PC-9 (cell line): ENCODE measurements at regions of chr5 and their contacts with region 1.

Region 1: GRCh38 chr5:169938439-169938838 is 41.9 kb downstream of the INSYN2B start:
- DNase-seq: no peak
- H3K4me3 ChIP-seq: no peak overlapping the region
- H3K27ac ChIP-seq: no peak overlapping the region
- H3K4me1 ChIP-seq: no peaks in the 10 kb centered on the region
- H3K27me3 ChIP-seq: no peaks in the 10 kb centered on the region
- CTCF ChIP-seq: no peak

Region 2: GRCh38 chr5:168607946-168608345 is 1330.5 kb before region 1 on chr5:
- CTCF ChIA-PET with region 1: no interaction called
- POLR2A ChIA-PET with region 1: interaction called, 12 read pairs
- intact Hi-C with region 1: no loop called
- DNase-seq: no peak
- H3K4me3 ChIP-seq: no peak overlapping the region
- H3K27ac ChIP-seq: no peak overlapping the region
- H3K4me1 ChIP-seq: no peaks in the 10 kb centered on the region
- H3K27me3 ChIP-seq: no peaks in the 10 kb centered on the region
- CTCF ChIP-seq: no peak

Region 3: GRCh38 chr5:169923988-169924387 is 14.5 kb before region 1 on chr5:
- CTCF ChIA-PET with region 1: no interaction called
- POLR2A ChIA-PET with region 1: no interaction called
- intact Hi-C with region 1: no loop called
- DNase-seq: no peak
- H3K4me3 ChIP-seq: no peak overlapping the region
- H3K27ac ChIP-seq: no peak overlapping the region
- H3K4me1 ChIP-seq: 0 out of 2 replicates have a peak, but pooled peaks cover 6% of the 10 kb centered on the region
- H3K27me3 ChIP-seq: no peaks in the 10 kb centered on the region
- CTCF ChIP-seq: no peak

Region 4: DNA sequence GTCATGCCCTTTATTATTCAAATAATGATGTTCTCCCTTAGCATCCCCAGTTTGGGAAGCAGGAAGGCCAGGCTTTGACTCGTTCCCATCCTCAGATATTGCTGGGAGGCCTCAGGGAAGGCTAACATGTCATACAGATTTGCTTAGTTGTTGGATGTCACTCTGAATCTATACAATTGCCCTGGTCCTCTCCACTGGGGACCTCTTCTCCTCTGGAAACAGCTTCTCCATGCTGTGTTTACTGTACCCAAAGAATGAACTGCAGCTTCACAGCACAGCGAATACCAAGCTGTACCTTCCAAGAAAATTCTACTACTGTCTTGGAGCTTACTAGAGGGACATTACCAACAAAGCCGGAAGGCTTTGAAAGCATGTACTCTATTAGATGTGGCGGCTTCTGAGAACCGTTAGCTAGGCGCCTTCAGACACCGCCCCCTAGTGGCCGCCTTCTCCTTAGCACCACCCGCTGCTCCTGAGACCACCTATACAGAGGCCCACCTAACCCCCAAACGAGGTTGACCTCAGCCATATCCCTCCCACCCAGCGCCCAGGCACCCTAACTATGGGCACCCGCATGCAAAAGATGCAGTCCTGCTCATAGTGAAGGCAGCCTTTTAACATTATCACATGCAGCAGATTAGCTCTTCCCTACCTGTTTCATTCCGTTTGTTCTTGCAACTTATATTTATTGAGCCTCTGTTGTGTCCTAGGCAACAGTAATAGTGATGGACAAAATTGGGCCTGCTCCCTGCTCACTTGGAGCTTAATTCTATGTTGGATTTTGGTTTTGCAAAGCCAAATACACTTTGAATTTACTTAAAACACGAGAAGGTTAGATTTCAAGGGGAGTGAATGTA is 132.3 kb after region 1 on chr5:
- CTCF ChIA-PET with region 1: no interaction called
- POLR2A ChIA-PET with region 1: no interaction called
- intact Hi-C with region 1: no loop called
- DNase-seq: no peak
- H3K4me3 ChIP-seq: no peak overlapping the region
- H3K27ac ChIP-seq: no peak overlapping the region
- H3K4me1 ChIP-seq: no peaks in the 10 kb centered on the region
- H3K27me3 ChIP-seq: no peaks in the 10 kb centered on the region
- CTCF ChIP-seq: peak; percentile 69

Region 5: DNA sequence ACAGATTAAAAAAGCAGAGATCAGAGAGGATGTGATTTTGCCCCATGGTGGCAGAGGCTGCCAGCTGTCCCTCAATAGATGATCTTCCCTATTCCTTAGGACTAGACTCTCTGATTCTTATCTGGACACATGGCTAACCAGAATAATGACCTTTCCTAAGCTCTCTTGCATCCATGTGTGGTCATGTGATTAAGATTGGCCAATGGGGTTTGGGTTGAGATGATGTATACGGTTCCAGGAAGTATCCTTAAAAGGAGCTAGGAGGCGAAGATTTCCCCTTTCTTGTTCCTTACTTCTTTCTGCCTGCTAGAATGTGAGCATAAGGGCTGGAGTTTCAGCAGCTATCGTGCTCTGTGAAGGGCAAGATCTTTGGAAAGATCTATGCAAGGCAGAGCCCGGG is 207.0 kb after region 1 on chr5:
- CTCF ChIA-PET with region 1: no interaction called
- POLR2A ChIA-PET with region 1: no interaction called
- intact Hi-C with region 1: no loop called
- DNase-seq: no peak
- H3K4me3 ChIP-seq: no peak overlapping the region
- H3K27ac ChIP-seq: no peak overlapping the region
- H3K4me1 ChIP-seq: peaks cover 7% of the 10 kb centered on the region
- H3K27me3 ChIP-seq: no peaks in the 10 kb centered on the region
- CTCF ChIP-seq: no peak

Region 6: GRCh38 chr5:170368586-170368985 is 430.1 kb after region 1 on chr5:
- CTCF ChIA-PET with region 1: no interaction called
- POLR2A ChIA-PET with region 1: no interaction called
- intact Hi-C with region 1: no loop called
- DNase-seq: no peak
- H3K4me3 ChIP-seq: no peak overlapping the region
- H3K27ac ChIP-seq: no peak overlapping the region
- H3K4me1 ChIP-seq: 0 out of 2 replicates have a peak, but pooled peaks cover 3% of the 10 kb centered on the region
- H3K27me3 ChIP-seq: peaks cover 22% of the 10 kb centered on the region; the same call in 1 of the 2 replicates
- CTCF ChIP-seq: no peak